ENCODE measurements at regions of chr19 and their contacts with region 1.

Region 1: GRCh38 chr19:8444645-8445487 is at the start of gene HNRNPM:
- DNase-seq: peak; percentile 100
- ATAC-seq: peak; percentile 93
- H3K4me3 Mint-ChIP-seq: peak within 1 kb of the TSS; percentile 94
- H3K27ac Mint-ChIP-seq: peak within 1 kb of the TSS; percentile 97
- H3K4me1 Mint-ChIP-seq: peaks cover 39% of the 10 kb centered on the region
- H3K27me3 Mint-ChIP-seq: no peaks in the 10 kb centered on the region
- total RNA-seq, gene HNRNPM: 250 to 304 TPM

Region 2: DNA sequence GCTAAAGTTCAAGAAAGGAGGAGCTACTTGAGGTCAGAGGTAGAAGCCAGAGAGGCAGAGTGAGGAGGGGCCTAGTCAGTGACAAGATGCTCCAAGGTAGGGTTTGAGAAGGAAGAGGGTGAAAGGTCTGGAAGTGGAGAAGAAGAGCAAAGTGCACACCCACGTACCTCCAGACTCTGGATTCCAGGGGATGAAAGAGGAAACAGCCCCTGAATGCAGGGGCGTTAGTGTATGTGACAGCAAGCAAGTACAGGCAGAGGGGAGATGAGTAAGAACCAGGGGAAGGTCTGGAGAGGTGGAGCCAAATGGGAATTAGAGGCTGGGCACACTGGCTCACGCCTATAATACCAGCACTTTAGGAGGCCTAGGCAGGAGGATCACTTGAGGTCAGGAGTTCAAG is 114.9 kb before region 1 on chr19:
- CTCF ChIA-PET with region 1: no interaction called
- POLR2A ChIA-PET with region 1: no interaction called
- intact Hi-C with region 1: no loop called
- DNase-seq: no peak
- ATAC-seq: no peak
- H3K4me3 Mint-ChIP-seq: no peak overlapping the region
- H3K27ac Mint-ChIP-seq: no peak overlapping the region
- H3K4me1 Mint-ChIP-seq: peaks cover 2% of the 10 kb centered on the region
- H3K27me3 Mint-ChIP-seq: peaks cover 7% of the 10 kb centered on the region

Region 3: GRCh38 chr19:8487137-8487851 is 42.4 kb after region 1 on chr19:
- CTCF ChIA-PET with region 1: interaction called, 3 read pairs
- POLR2A ChIA-PET with region 1: no interaction called
- intact Hi-C with region 1: loop called (anchors 2 to 5 kb)
- DNase-seq: peak; percentile 85
- ATAC-seq: peak; percentile 90
- H3K4me3 Mint-ChIP-seq: no peak overlapping the region
- H3K27ac Mint-ChIP-seq: peak overlapping the region; percentile 95
- H3K4me1 Mint-ChIP-seq: peaks cover 38% of the 10 kb centered on the region
- H3K27me3 Mint-ChIP-seq: no peaks in the 10 kb centered on the region

Region 4: GRCh38 chr19:8505680-8506401 is 61.0 kb after region 1 on chr19:
- CTCF ChIA-PET with region 1: interaction called, 4 read pairs
- POLR2A ChIA-PET with region 1: no interaction called
- intact Hi-C with region 1: loop called in 1 of 2 experiments (anchors 1 kb)
- DNase-seq: peak; percentile 87
- ATAC-seq: peak; percentile 79
- H3K4me3 Mint-ChIP-seq: peak overlapping the region; percentile 80
- H3K27ac Mint-ChIP-seq: peak overlapping the region; percentile 80
- H3K4me1 Mint-ChIP-seq: peaks cover 18% of the 10 kb centered on the region
- H3K27me3 Mint-ChIP-seq: no peaks in the 10 kb centered on the region

Region 5: DNA sequence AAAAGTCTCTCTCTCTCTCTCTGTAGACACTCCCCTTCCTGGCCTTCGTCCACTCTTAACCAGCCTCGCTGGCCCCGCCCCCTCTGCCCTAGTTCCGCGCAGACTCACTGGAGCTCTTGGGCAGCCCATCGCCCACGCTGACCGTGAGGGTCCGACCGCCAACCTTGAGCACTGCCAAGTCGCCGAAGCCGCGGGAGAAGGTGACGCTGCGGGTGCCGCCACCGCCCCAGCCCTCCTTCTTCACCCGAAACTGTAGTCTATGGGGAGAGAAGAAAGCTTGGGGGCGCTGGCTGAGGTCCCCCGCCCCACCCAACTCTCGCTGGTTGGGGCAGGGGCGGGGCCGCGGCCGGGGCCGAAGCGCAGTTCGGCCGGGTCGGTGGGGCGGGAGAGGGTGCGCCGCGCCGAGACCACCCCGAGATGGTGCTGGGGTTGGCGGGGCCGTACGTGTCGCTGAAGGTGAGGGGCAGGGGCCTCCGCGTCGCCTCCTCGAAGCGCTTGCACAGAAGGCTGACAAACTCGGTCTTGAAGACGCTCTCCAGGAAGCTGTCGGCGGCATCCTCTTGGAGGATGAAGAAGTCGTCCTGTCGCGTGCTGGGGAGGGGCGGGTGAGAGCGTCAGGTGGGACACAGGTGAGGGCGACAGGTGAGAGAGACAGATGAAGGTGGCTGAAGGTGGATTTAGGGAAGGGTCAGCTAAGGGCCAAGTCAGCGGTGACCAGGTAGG is 81.6 kb after region 1 on chr19:
- CTCF ChIA-PET with region 1: no interaction called
- POLR2A ChIA-PET with region 1: no interaction called
- intact Hi-C with region 1: no loop called
- DNase-seq: no peak
- ATAC-seq: no peak
- H3K4me3 Mint-ChIP-seq: no peak overlapping the region
- H3K27ac Mint-ChIP-seq: no peak overlapping the region
- H3K4me1 Mint-ChIP-seq: peaks cover 5% of the 10 kb centered on the region
- H3K27me3 Mint-ChIP-seq: no peaks in the 10 kb centered on the region

Region 6: GRCh38 chr19:8663920-8664670 is 219.2 kb after region 1 on chr19:
- CTCF ChIA-PET with region 1: no interaction called
- POLR2A ChIA-PET with region 1: no interaction called
- intact Hi-C with region 1: no loop called
- DNase-seq: peak; percentile 69
- ATAC-seq: peak; percentile 50
- H3K4me3 Mint-ChIP-seq: no peak overlapping the region
- H3K27ac Mint-ChIP-seq: peak overlapping the region; percentile 20
- H3K4me1 Mint-ChIP-seq: peaks cover 35% of the 10 kb centered on the region
- H3K27me3 Mint-ChIP-seq: no peaks in the 10 kb centered on the region

Region 7: GRCh38 chr19:8794823-8795222 is 350.0 kb after region 1 on chr19:
- CTCF ChIA-PET with region 1: no interaction called
- POLR2A ChIA-PET with region 1: no interaction called
- intact Hi-C with region 1: no loop called
- DNase-seq: no peak
- ATAC-seq: no peak
- H3K4me3 Mint-ChIP-seq: no peak overlapping the region
- H3K27ac Mint-ChIP-seq: no peak overlapping the region
- H3K4me1 Mint-ChIP-seq: no peaks in the 10 kb centered on the region
- H3K27me3 Mint-ChIP-seq: no peaks in the 10 kb centered on the region